Stomach (tissue), 19 donors: ENCODE measurements at regions of chr7 and their contacts with region 1.

Region 1: DNA sequence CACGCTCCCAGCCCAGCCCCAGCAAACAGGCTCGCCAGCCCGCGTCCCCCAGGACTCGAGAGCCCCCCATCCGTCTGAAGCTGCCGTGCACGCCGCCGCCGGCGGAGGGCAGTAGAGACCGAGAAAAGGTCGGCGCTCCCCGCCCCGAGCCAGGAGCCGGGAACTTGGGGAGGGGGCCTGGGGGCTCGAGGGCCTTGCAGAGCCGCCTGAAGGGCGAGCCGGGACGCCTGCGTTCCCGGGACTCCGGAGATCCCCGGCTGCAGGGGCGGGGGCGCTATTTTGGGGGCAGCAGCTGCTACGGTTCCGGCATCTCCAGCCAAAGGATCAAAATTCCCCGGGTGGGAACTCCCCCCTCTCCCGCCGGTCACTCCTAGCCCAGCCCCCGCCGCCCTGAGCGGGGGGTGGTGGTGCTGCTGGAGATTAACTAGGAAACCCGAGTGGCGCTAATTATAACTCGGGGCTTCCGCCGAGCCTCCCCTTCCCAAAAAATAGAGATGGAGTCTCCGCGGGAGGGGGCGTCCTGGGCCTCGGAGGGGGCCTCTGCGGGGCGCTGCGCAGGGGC is 747 bp downstream of the ACHE start:
- DNase-seq: peak; percentile 50 to 85
- H3K4me3 ChIP-seq: peak overlapping the region; percentile 41 to 56 (median 46)
- H3K27ac ChIP-seq: peak overlapping the region in 1 of 5 donors; percentile 42
- H3K4me1 ChIP-seq: peaks cover 43 to 51% (median 50%) of the 10 kb centered on the region in 4 donors
- H3K27me3 ChIP-seq: peaks cover 19 to 86% (median 34%) of the 10 kb centered on the region in 3 donors
- CTCF ChIP-seq: peak in 5 of 7 experiments; percentile 68 to 92 (median 82)
- EP300 ChIP-seq: no peak
- POLR2A ChIP-seq: no peak

Region 2: GRCh38 chr7:101058355-101058754 is 163.4 kb after region 1 on chr7:
- intact Hi-C with region 1: loop called (anchors 5 kb)
- DNase-seq: peak; percentile 44 to 76
- H3K4me3 ChIP-seq: no peak overlapping the region
- H3K27ac ChIP-seq: no peak overlapping the region
- H3K4me1 ChIP-seq: peaks cover 0 to 6% (median 0%) of the 10 kb centered on the region in 4 donors
- H3K27me3 ChIP-seq: peaks cover 0 to 82% (median 29%) of the 10 kb centered on the region in 3 donors
- CTCF ChIP-seq: no peak
- EP300 ChIP-seq: no peak
- POLR2A ChIP-seq: no peak

Region 3: GRCh38 chr7:101784292-101785127 is 889.6 kb after region 1 on chr7:
- intact Hi-C with region 1: no loop called
- DNase-seq: peak in 1 of 2 donors; percentile 51
- H3K4me3 ChIP-seq: no peak overlapping the region
- H3K27ac ChIP-seq: no peak overlapping the region
- H3K4me1 ChIP-seq: peaks cover 0 to 20% (median 3%) of the 10 kb centered on the region in 4 donors
- H3K27me3 ChIP-seq: no peaks in the 10 kb centered on the region
- CTCF ChIP-seq: no peak
- EP300 ChIP-seq: no peak
- POLR2A ChIP-seq: no peak